Naive thymus-derived CD4-positive, alpha-beta T cell (primary cell): ENCODE measurements at regions of chr6 and their contacts with region 1.

Region 1: GRCh38 chr6:135535989-135536414 is 38.5 kb upstream of the AHI1 start:
- DNase-seq: peak in 7 of 9 donors; percentile 4 to 54 (median 36)
- ATAC-seq: peak; percentile 60
- H3K4me3 ChIP-seq: no peak overlapping the region
- H3K4me3 Mint-ChIP-seq: peak overlapping the region in 8 of 10 donors; percentile 48 to 80 (median 69)
- H3K27ac ChIP-seq: no peak overlapping the region
- H3K27ac Mint-ChIP-seq: peak overlapping the region in 3 of 9 donors; percentile 34 to 80 (median 41)
- H3K4me1 ChIP-seq: peaks cover 4 to 12% of the 10 kb centered on the region in 2 donors
- H3K4me1 Mint-ChIP-seq: peaks cover 0 to 46% (median 9%) of the 10 kb centered on the region in 7 donors
- H3K27me3 ChIP-seq: no peaks in the 10 kb centered on the region
- H3K27me3 Mint-ChIP-seq: peaks cover 0 to 4% (median 0%) of the 10 kb centered on the region in 5 donors

Region 2: DNA sequence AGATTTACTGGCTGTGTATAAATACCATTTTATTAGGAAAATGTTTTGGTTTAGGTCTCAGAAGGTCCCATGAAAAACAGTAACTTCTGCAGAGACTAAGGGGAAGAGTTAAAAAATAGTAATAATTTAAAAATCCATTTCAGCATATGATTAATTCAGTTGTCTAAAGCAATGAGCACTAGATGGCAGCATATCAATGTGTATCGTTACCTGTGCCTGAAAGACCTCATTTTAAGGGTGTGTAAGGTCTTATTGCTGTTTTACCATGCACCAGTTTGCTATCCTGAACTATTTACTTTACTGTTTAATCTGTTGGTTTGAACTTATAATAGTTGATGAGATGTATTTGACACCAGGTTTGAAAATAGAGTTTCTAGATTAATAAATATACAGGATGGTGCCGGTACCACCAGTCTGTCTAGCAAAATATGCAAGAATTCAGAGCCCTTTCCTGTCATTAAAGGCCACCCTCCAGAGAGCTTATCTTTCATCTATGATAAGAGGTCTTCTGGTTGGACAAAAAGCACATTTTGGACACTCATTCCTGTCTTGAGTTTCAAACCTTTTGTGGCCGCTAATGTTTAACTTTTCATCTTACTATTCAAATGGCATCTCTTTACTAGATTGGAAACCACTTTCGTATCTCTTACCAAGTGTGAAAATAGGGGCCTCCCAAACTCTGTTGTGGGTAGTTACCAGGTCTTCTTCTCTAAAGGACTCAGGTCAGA is 29.6 kb before region 1 on chr6:
- CTCF ChIA-PET with region 1: interaction called, 5 read pairs
- POLR2A ChIA-PET with region 1: no interaction called
- intact Hi-C with region 1: loop called in 1 of 2 experiments (anchors 1 kb)
- DNase-seq: peak in 7 of 9 donors; percentile 7 to 53 (median 33)
- ATAC-seq: peak; percentile 90
- H3K4me3 ChIP-seq: no peak overlapping the region
- H3K4me3 Mint-ChIP-seq: no peak overlapping the region
- H3K27ac ChIP-seq: no peak overlapping the region
- H3K27ac Mint-ChIP-seq: peak overlapping the region in 1 of 9 donors; percentile 33
- H3K4me1 ChIP-seq: peaks cover 0 to 6% of the 10 kb centered on the region in 2 donors
- H3K4me1 Mint-ChIP-seq: peaks cover 0 to 14% (median 0%) of the 10 kb centered on the region in 7 donors
- H3K27me3 ChIP-seq: no peaks in the 10 kb centered on the region
- H3K27me3 Mint-ChIP-seq: peaks cover 0 to 2% (median 0%) of the 10 kb centered on the region in 5 donors

Region 3: GRCh38 chr6:135586841-135587240 is 50.8 kb after region 1 on chr6:
- CTCF ChIA-PET with region 1: no interaction called
- POLR2A ChIA-PET with region 1: no interaction called
- intact Hi-C with region 1: loop called in 1 of 2 experiments (anchors 1 kb)
- DNase-seq: peak in 2 of 9 donors; percentile 6 to 13
- ATAC-seq: peak; percentile 32
- H3K4me3 ChIP-seq: no peak overlapping the region
- H3K4me3 Mint-ChIP-seq: peak overlapping the region in 1 of 10 donors; percentile 50
- H3K27ac ChIP-seq: no peak overlapping the region
- H3K27ac Mint-ChIP-seq: peak overlapping the region in 1 of 9 donors; percentile 91
- H3K4me1 ChIP-seq: no peaks in the 10 kb centered on the region
- H3K4me1 Mint-ChIP-seq: peaks cover 1 to 62% (median 13%) of the 10 kb centered on the region in 7 donors
- H3K27me3 ChIP-seq: no peaks in the 10 kb centered on the region
- H3K27me3 Mint-ChIP-seq: no peaks in the 10 kb centered on the region

Region 4: GRCh38 chr6:135675862-135676261 is 139.9 kb after region 1 on chr6:
- CTCF ChIA-PET with region 1: interaction called, 4 read pairs
- POLR2A ChIA-PET with region 1: no interaction called
- intact Hi-C with region 1: loop called (anchors 1 kb)
- DNase-seq: peak in 7 of 9 donors; percentile 51 to 71 (median 63)
- ATAC-seq: peak; percentile 79
- H3K4me3 ChIP-seq: no peak overlapping the region
- H3K4me3 Mint-ChIP-seq: no peak overlapping the region
- H3K27ac ChIP-seq: no peak overlapping the region
- H3K27ac Mint-ChIP-seq: peak overlapping the region in 2 of 9 donors; percentile 53 to 63
- H3K4me1 ChIP-seq: no peaks in the 10 kb centered on the region
- H3K4me1 Mint-ChIP-seq: peaks cover 0 to 39% (median 0%) of the 10 kb centered on the region in 7 donors
- H3K27me3 ChIP-seq: peaks cover 0 to 4% of the 10 kb centered on the region in 2 donors
- H3K27me3 Mint-ChIP-seq: no peaks in the 10 kb centered on the region

Region 5: GRCh38 chr6:135909737-135910387 is 373.9 kb after region 1 on chr6:
- CTCF ChIA-PET with region 1: interaction called, 11 read pairs
- POLR2A ChIA-PET with region 1: interaction called, 3 read pairs
- intact Hi-C with region 1: loop called (anchors 1 kb)
- DNase-seq: peak; percentile 11 to 83 (median 73)
- ATAC-seq: peak; percentile 84
- H3K4me3 ChIP-seq: no peak overlapping the region
- H3K4me3 Mint-ChIP-seq: peak overlapping the region in 7 of 10 donors; percentile 46 to 77 (median 61)
- H3K27ac ChIP-seq: no peak overlapping the region
- H3K27ac Mint-ChIP-seq: peak overlapping the region in 3 of 9 donors; percentile 41 to 66 (median 43)
- H3K4me1 ChIP-seq: no peaks in the 10 kb centered on the region
- H3K4me1 Mint-ChIP-seq: peaks cover 0 to 19% (median 10%) of the 10 kb centered on the region in 7 donors
- H3K27me3 ChIP-seq: no peaks in the 10 kb centered on the region
- H3K27me3 Mint-ChIP-seq: no peaks in the 10 kb centered on the region